Ascending aorta (tissue), 2 donors: ENCODE measurements at regions of chr1 and their contacts with region 1.

Region 1: DNA sequence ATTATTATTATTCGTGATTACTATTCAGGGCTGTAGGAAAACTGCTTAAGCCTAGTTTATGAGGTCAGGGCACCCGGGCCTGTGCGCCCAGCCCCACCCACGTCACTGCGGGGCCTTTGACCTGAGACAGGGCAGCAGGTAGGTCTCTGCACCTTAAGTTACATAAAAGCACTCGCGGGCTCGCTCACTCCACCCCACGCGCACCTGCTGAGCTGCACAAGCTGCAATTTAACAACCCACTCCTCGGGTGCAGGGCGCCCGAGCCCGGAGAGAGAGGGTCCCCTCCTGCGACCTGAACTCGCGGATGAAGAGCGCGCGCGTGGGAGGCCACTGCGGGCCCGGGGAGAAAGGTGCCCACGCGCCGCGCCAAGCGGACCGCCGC is 477 bp downstream of the ICMT start:
- DNase-seq: no peak
- H3K4me3 ChIP-seq: peak overlapping the region; percentile 78 to 89
- H3K27ac ChIP-seq: no peak overlapping the region
- H3K4me1 ChIP-seq: peaks cover 2 to 9% of the 10 kb centered on the region in 2 donors
- H3K27me3 ChIP-seq: no peaks in the 10 kb centered on the region
- CTCF ChIP-seq: no peak

Region 2: GRCh38 chr1:6199298-6200187 is 35.7 kb before region 1 on chr1 and contains the start of gene RPL22:
- intact Hi-C with region 1: loop called (anchors 1 kb)
- DNase-seq: peak; percentile 91 to 99
- H3K4me3 ChIP-seq: peak within 1 kb of the TSS; percentile 77 to 86
- H3K27ac ChIP-seq: peak within 1 kb of the TSS; percentile 79 to 82
- H3K4me1 ChIP-seq: peaks cover 15 to 26% of the 10 kb centered on the region in 2 donors
- H3K27me3 ChIP-seq: no peaks in the 10 kb centered on the region
- CTCF ChIP-seq: no peak
- total RNA-seq, gene RPL22: 88.8 TPM